ENCODE measurements at regions of chr6 and their contacts with region 1.

Region 1: DNA sequence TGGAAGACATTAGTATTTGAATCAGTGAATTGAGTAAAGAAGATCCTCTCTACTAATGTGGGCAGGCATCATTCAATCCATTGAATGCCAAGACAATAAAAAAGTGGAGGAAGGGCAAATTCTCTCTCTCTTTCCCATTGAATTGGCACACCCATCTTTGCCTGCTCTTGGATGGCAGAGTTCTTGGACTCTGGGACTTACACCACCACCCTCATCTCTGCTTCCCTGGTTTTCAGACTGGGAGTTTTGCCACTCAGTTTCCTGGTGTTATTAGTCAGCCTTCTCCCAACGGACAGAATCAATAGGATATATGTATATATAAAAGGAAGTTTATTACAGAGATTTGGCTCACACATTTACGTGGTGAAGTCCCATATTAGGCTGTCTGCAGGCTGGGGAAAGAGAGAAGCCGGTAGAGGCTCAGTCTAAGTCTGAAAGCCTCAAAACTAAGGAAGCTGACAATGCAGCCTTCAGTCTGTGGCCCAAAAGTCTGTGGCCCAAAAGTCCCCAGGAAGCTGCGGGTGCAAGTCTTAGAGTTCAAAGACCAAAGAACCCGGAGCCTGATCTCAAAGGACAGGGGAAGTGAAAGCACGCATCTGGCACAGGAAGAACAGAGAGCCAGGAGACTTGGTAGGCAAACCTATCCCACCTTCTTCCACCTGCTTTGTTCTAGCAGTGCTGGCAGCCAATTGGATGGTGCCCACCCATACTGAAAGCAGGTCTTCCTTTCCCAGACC is 64.4 kb downstream of the SMPDL3A start:
- DNase-seq: no peak
- ATAC-seq: no peak
- H3K4me3 ChIP-seq: no peak overlapping the region
- H3K27ac ChIP-seq: no peak overlapping the region
- H3K4me1 ChIP-seq: no peaks in the 10 kb centered on the region
- H3K27me3 ChIP-seq: no peaks in the 10 kb centered on the region
- CTCF ChIP-seq: no peak

Region 2: GRCh38 chr6:122818866-122819265 is 34.6 kb before region 1 on chr6:
- intact Hi-C with region 1: no loop called
- DNase-seq: no peak
- ATAC-seq: no peak
- H3K4me3 ChIP-seq: no peak overlapping the region
- H3K27ac ChIP-seq: no peak overlapping the region
- H3K4me1 ChIP-seq: no peaks in the 10 kb centered on the region
- H3K27me3 ChIP-seq: no peaks in the 10 kb centered on the region
- CTCF ChIP-seq: no peak

Region 3: DNA sequence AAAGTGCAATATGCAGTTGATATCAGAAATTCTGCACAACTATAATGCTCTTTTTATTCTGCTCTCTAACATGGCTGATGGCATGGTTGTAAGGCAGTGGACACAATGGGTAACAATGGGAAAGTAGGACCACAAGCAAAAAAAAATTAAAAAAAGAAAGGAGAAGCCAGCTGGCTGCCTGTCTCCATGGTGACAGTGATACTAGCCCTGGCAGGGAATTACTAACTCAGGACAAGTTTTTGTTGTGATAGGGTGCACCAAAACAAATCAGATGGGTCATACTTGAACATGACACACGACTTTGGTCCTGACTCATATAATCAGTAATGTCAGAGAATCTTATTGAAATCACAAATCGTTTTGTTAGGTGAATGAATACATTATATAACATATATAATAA is 614.0 kb after region 1 on chr6:
- intact Hi-C with region 1: loop called in 1 of 2 experiments (anchors 5 kb)
- DNase-seq: no peak
- ATAC-seq: peak; percentile 40 to 73 (median 64)
- H3K4me3 ChIP-seq: no peak overlapping the region
- H3K27ac ChIP-seq: peak overlapping the region; percentile 11
- H3K4me1 ChIP-seq: peaks cover 7% of the 10 kb centered on the region
- H3K27me3 ChIP-seq: no peaks in the 10 kb centered on the region
- CTCF ChIP-seq: no peak

Measured in psoas muscle (tissue), 8 donors.